ENCODE measurements at regions of chr9 and their contacts with region 1.

Region 1: GRCh38 chr9:68895741-68896478 is 118.0 kb downstream of the PRKACG start:
- DNase-seq: peak in 1 of 9 experiments; percentile 40
- ATAC-seq: no peak
- H3K4me3 ChIP-seq: no peak overlapping the region
- H3K4me3 Mint-ChIP-seq: peak overlapping the region; percentile 51
- H3K27ac ChIP-seq: no peak overlapping the region
- H3K27ac Mint-ChIP-seq: peak overlapping the region; percentile 71
- H3K4me1 ChIP-seq: peaks cover 28% of the 10 kb centered on the region
- H3K4me1 Mint-ChIP-seq: peaks cover 29% of the 10 kb centered on the region
- H3K27me3 ChIP-seq: no peaks in the 10 kb centered on the region
- H3K27me3 Mint-ChIP-seq: no peaks in the 10 kb centered on the region
- CTCF ChIP-seq: no peak

Region 2: DNA sequence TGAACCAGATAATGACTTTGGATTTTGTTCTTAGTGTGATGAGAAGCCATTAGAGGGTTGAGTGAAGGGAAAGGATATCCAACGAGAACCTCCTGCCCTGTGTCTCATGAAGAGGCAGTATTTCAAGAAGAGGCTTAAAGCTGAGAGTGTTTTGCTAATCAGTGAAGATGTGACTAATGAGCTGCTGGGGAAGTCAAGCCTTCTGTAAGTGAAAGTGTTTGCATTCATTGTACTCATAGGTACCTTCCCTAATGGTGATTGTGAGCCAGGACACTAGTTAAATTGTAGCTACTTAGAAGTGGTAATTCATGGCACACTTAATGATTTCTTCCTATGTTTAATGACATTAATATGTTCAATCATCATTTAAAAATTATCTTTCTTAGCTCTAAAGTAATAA is 167.2 kb before region 1 on chr9:
- CTCF ChIA-PET with region 1: no interaction called
- POLR2A ChIA-PET with region 1: no interaction called
- intact Hi-C with region 1: loop called in 1 of 2 experiments (anchors 10 kb)
- DNase-seq: no peak
- ATAC-seq: no peak
- H3K4me3 ChIP-seq: no peak overlapping the region
- H3K4me3 Mint-ChIP-seq: no peak overlapping the region
- H3K27ac ChIP-seq: no peak overlapping the region
- H3K27ac Mint-ChIP-seq: no peak overlapping the region
- H3K4me1 ChIP-seq: no peaks in the 10 kb centered on the region
- H3K4me1 Mint-ChIP-seq: no peaks in the 10 kb centered on the region
- H3K27me3 ChIP-seq: no peaks in the 10 kb centered on the region
- H3K27me3 Mint-ChIP-seq: peaks cover 23% of the 10 kb centered on the region
- CTCF ChIP-seq: no peak

Region 3: GRCh38 chr9:68762570-68762969 is 133.3 kb before region 1 on chr9:
- CTCF ChIA-PET with region 1: no interaction called
- POLR2A ChIA-PET with region 1: no interaction called
- intact Hi-C with region 1: loop called in 1 of 2 experiments (anchors 10 kb)
- DNase-seq: no peak
- ATAC-seq: no peak
- H3K4me3 ChIP-seq: no peak overlapping the region
- H3K4me3 Mint-ChIP-seq: no peak overlapping the region
- H3K27ac ChIP-seq: no peak overlapping the region
- H3K27ac Mint-ChIP-seq: no peak overlapping the region
- H3K4me1 ChIP-seq: no peaks in the 10 kb centered on the region
- H3K4me1 Mint-ChIP-seq: no peaks in the 10 kb centered on the region
- H3K27me3 ChIP-seq: no peaks in the 10 kb centered on the region
- H3K27me3 Mint-ChIP-seq: peaks cover 28% of the 10 kb centered on the region
- CTCF ChIP-seq: no peak

Region 4: DNA sequence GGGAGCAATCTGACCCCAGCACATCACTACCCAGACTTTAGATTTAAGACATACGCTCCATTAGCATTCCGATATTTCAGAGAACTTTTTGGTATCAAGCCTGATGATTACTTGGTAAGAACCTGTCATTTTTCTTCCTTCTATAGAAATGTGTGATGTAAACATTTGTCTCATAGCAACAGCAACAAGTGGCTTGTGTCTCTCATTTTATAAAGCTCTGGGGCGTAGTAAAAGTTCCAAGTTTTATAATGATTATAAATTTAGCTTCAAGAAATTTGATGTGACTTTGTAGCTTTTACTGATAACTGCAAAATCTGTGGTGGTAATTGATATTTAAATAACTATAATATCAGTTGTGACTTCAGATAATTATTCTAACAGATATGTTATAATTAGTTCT is 19.2 kb before region 1 on chr9:
- CTCF ChIA-PET with region 1: no interaction called
- POLR2A ChIA-PET with region 1: no interaction called
- intact Hi-C with region 1: no loop called
- DNase-seq: no peak
- ATAC-seq: no peak
- H3K4me3 ChIP-seq: no peak overlapping the region
- H3K4me3 Mint-ChIP-seq: no peak overlapping the region
- H3K27ac ChIP-seq: no peak overlapping the region
- H3K27ac Mint-ChIP-seq: no peak overlapping the region
- H3K4me1 ChIP-seq: no peaks in the 10 kb centered on the region
- H3K4me1 Mint-ChIP-seq: no peaks in the 10 kb centered on the region
- H3K27me3 ChIP-seq: no peaks in the 10 kb centered on the region
- H3K27me3 Mint-ChIP-seq: peaks cover 13% of the 10 kb centered on the region
- CTCF ChIP-seq: no peak

Region 5: GRCh38 chr9:69173891-69174615 is 278.1 kb after region 1 on chr9 and contains the start of gene TJP2:
- CTCF ChIA-PET with region 1: no interaction called
- POLR2A ChIA-PET with region 1: no interaction called
- intact Hi-C with region 1: no loop called
- DNase-seq: peak in 6 of 9 experiments; percentile 3 to 50 (median 32)
- ATAC-seq: peak; percentile 20
- H3K4me3 ChIP-seq: peak within 1 kb of the TSS; percentile 51 to 52
- H3K4me3 Mint-ChIP-seq: peak within 1 kb of the TSS; percentile 81
- H3K27ac ChIP-seq: no peak within 1 kb of the TSS
- H3K27ac Mint-ChIP-seq: peak within 1 kb of the TSS; percentile 3
- H3K4me1 ChIP-seq: peaks cover 15% of the 10 kb centered on the region
- H3K4me1 Mint-ChIP-seq: peaks cover 19% of the 10 kb centered on the region
- H3K27me3 ChIP-seq: peaks cover 4 to 24% of the 10 kb centered on the region in 2 experiments
- H3K27me3 Mint-ChIP-seq: peaks cover 44% of the 10 kb centered on the region
- CTCF ChIP-seq: no peak
- total RNA-seq, gene TJP2: 3.2 to 3.9 TPM

Region 6: GRCh38 chr9:69485470-69485869 is 589.6 kb after region 1 on chr9:
- CTCF ChIA-PET with region 1: no interaction called
- POLR2A ChIA-PET with region 1: no interaction called
- intact Hi-C with region 1: no loop called
- DNase-seq: peak in 1 of 9 experiments; percentile 24
- ATAC-seq: peak; percentile 51
- H3K4me3 ChIP-seq: no peak overlapping the region
- H3K4me3 Mint-ChIP-seq: no peak overlapping the region
- H3K27ac ChIP-seq: no peak overlapping the region
- H3K27ac Mint-ChIP-seq: no peak overlapping the region
- H3K4me1 ChIP-seq: no peaks in the 10 kb centered on the region
- H3K4me1 Mint-ChIP-seq: peaks cover 2% of the 10 kb centered on the region
- H3K27me3 ChIP-seq: no peaks in the 10 kb centered on the region
- H3K27me3 Mint-ChIP-seq: peaks cover 4% of the 10 kb centered on the region
- CTCF ChIP-seq: no peak

Measured in CD8-positive, alpha-beta T cell (primary cell).